ENCODE measurements at regions of chr3 and their contacts with region 1.

Region 1: DNA sequence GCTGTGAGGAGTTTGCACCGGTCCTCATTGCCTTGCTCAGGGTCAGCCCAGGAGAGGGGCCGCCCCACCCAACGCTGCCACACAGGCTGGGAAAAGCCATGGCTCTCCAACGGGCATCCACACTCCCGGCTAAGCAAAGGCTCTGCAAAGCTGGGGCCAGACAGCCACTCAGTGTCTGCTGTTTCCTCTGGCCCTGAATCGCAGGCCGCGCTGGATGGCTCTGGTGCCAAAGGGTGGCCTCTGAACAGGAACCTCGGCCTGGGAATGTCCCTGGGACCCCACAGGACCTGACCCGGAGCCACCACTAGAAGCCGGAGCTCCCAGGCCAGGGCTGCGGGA is 42.9 kb downstream of the RPN1 start:
- DNase-seq: no peak
- H3K4me3 Mint-ChIP-seq: no peak overlapping the region
- H3K27ac Mint-ChIP-seq: no peak overlapping the region
- H3K4me1 Mint-ChIP-seq: no peaks in the 10 kb centered on the region
- H3K27me3 Mint-ChIP-seq: peaks cover 12% of the 10 kb centered on the region

Region 2: GRCh38 chr3:128572644-128573105 is 35.0 kb before region 1 on chr3:
- intact Hi-C with region 1: loop called (anchors 2 kb)
- DNase-seq: no peak
- H3K4me3 Mint-ChIP-seq: no peak overlapping the region
- H3K27ac Mint-ChIP-seq: peak overlapping the region; percentile 3
- H3K4me1 Mint-ChIP-seq: peaks cover 11% of the 10 kb centered on the region
- H3K27me3 Mint-ChIP-seq: peaks cover 31% of the 10 kb centered on the region